ENCODE measurements at regions of chr11 and their contacts with region 1.

Region 1: DNA sequence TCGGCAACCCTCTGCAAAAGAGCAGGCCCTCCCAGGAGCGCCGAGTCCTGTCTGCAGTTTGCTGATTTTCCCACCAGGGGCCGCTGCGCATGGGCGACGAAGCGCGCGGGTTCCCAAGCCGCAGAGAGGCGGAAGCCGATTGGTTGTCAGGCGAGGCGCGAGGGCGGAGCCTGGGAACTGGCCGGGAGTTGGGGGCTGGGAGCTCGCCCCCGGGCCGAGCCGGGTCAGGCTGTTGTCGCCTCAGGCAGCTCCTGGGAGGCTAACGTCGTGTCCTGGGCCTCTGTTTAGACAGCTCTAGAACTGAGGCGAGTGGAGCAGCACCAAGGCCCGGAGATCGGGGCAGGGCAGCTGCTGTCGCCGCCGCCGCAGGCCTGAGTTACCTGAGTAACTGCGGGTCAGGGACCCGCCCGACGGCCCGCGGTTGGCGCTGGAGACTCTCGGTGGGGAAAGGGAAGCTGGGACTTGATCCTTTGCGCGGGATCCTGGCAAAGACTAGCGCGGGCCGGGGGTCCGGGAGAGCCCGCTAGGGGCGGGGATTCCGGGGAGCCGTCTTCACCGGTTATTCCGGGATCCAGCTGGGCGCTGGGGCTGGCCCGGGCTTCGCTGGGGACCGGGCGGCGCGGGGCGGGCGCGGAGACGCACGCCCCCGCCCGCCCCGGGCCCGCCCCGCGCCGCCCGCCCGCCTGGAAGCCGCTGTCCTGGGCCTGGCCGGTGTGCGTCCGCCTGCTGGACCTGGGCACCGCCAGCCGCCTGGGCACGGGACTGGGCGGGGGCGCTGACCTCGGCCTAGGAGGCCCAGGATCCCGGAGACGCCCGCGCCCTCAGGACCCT is at the start of gene STIM1:
- DNase-seq: peak; percentile 98
- ATAC-seq: peak; percentile 77 to 92 (median 84)
- H3K4me3 ChIP-seq: peak within 1 kb of the TSS; percentile 96
- H3K4me3 Mint-ChIP-seq: peak within 1 kb of the TSS; percentile 96
- H3K27ac ChIP-seq: peak within 1 kb of the TSS; percentile 86
- H3K27ac Mint-ChIP-seq: peak within 1 kb of the TSS; percentile 83 to 100
- H3K4me1 ChIP-seq: peaks cover 49% of the 10 kb centered on the region
- H3K4me1 Mint-ChIP-seq: peaks cover 67 to 69% of the 10 kb centered on the region in 2 donors
- H3K27me3 ChIP-seq: no peaks in the 10 kb centered on the region
- H3K27me3 Mint-ChIP-seq: no peaks in the 10 kb centered on the region
- CTCF ChIP-seq: peak; percentile 94
- total RNA-seq, gene STIM1: 171 to 187 (median 175) TPM

Region 2: DNA sequence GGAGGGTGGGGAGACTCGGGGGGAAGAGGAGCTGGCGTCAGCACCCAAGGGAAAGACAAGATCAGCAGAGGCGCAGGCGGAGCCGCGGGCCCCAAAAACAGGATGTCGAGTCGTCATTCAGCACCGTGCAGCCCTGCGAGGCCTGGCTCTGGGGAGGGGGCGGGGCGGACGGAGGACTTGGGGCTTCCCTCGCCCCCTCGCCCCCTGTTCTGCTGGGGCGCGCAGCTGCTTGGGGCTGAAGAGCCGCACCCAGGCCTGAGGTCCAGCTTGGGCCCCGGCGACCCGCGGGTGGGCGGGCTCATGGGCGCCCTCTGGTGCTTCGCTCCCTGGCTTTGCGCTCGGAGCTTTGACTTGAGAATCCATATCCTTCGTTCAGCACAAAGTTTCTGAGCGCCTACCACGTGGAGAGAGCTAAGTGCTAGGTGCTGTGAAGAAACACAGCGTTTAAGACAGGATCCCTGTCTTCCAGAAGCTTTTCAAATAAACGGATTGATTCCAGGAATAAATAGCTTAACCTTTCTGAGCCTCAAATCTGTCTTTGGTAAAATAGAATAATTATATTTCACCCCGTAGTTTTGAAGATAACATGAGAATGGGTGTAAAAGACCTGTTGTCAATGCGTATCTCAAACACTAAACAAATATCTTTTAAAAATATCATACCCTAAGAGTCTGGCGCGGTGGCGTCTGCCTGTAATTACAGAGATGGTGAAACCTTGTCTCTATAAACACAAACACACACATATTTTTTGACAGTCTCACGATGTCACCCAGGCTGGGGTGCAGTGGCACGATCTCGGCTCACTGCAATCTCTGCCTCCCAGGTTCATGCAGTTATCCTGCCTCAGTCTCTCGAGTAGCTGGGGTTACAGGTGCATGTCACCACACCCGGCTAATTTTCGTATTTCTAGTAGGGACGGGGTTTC is 13.5 kb before region 1 on chr11:
- intact Hi-C with region 1: loop called (anchors 1 kb)
- DNase-seq: peak; percentile 89 to 97
- ATAC-seq: peak in 1 of 3 donors; percentile 86
- H3K4me3 ChIP-seq: peak overlapping the region; percentile 38
- H3K4me3 Mint-ChIP-seq: peak overlapping the region; percentile 90
- H3K27ac ChIP-seq: peak overlapping the region; percentile 97
- H3K27ac Mint-ChIP-seq: peak overlapping the region; percentile 90 to 95
- H3K4me1 ChIP-seq: peaks cover 43% of the 10 kb centered on the region
- H3K4me1 Mint-ChIP-seq: peaks cover 31 to 38% of the 10 kb centered on the region in 2 donors
- H3K27me3 ChIP-seq: no peaks in the 10 kb centered on the region
- H3K27me3 Mint-ChIP-seq: no peaks in the 10 kb centered on the region
- CTCF ChIP-seq: peak; percentile 77

Region 3: GRCh38 chr11:3894128-3894731 is 39.0 kb after region 1 on chr11:
- intact Hi-C with region 1: loop called (anchors 5 kb)
- DNase-seq: peak in 1 of 2 donors; percentile 26
- ATAC-seq: peak; percentile 68 to 80 (median 70)
- H3K4me3 ChIP-seq: no peak overlapping the region
- H3K4me3 Mint-ChIP-seq: peak overlapping the region; percentile 70
- H3K27ac ChIP-seq: peak overlapping the region; percentile 23
- H3K27ac Mint-ChIP-seq: peak overlapping the region; percentile 83 to 94
- H3K4me1 ChIP-seq: peaks cover 23% of the 10 kb centered on the region
- H3K4me1 Mint-ChIP-seq: peaks cover 61 to 63% of the 10 kb centered on the region in 2 donors
- H3K27me3 ChIP-seq: no peaks in the 10 kb centered on the region
- H3K27me3 Mint-ChIP-seq: no peaks in the 10 kb centered on the region
- CTCF ChIP-seq: no peak

Region 4: GRCh38 chr11:3947061-3947460 is 91.9 kb after region 1 on chr11:
- intact Hi-C with region 1: loop called (anchors 1 kb)
- DNase-seq: peak; percentile 44 to 84
- ATAC-seq: peak; percentile 78 to 92 (median 91)
- H3K4me3 ChIP-seq: no peak overlapping the region
- H3K4me3 Mint-ChIP-seq: peak overlapping the region; percentile 84
- H3K27ac ChIP-seq: peak overlapping the region; percentile 82
- H3K27ac Mint-ChIP-seq: peak overlapping the region; percentile 87 to 91
- H3K4me1 ChIP-seq: peaks cover 80% of the 10 kb centered on the region
- H3K4me1 Mint-ChIP-seq: peaks cover 96% of the 10 kb centered on the region in 2 donors
- H3K27me3 ChIP-seq: no peaks in the 10 kb centered on the region
- H3K27me3 Mint-ChIP-seq: no peaks in the 10 kb centered on the region
- CTCF ChIP-seq: no peak

Region 5: GRCh38 chr11:4072668-4073285 is 217.6 kb after region 1 on chr11:
- intact Hi-C with region 1: loop called (anchors 1 kb)
- DNase-seq: peak in 1 of 2 donors; percentile 88
- ATAC-seq: peak; percentile 85 to 97 (median 91)
- H3K4me3 ChIP-seq: no peak overlapping the region
- H3K4me3 Mint-ChIP-seq: no peak overlapping the region
- H3K27ac ChIP-seq: peak overlapping the region; percentile 19
- H3K27ac Mint-ChIP-seq: peak overlapping the region; percentile 47 to 64
- H3K4me1 ChIP-seq: peaks cover 6% of the 10 kb centered on the region
- H3K4me1 Mint-ChIP-seq: peaks cover 42 to 47% of the 10 kb centered on the region in 2 donors
- H3K27me3 ChIP-seq: no peaks in the 10 kb centered on the region
- H3K27me3 Mint-ChIP-seq: no peaks in the 10 kb centered on the region
- CTCF ChIP-seq: peak; percentile 79

Measured in natural killer cell (primary cell).